GM18951 (cell line): ENCODE measurements at regions of chr5 and their contacts with region 1.

Region 1: GRCh38 chr5:113606298-113607134 is 93.0 kb downstream of the YTHDC2 start:
- POLR2A ChIP-seq: no peak

Region 2: GRCh38 chr5:113371721-113372196 is 234.8 kb before region 1 on chr5:
- in situ Hi-C with region 1: loop called (anchors 25 kb)
- POLR2A ChIP-seq: no peak

Region 3: DNA sequence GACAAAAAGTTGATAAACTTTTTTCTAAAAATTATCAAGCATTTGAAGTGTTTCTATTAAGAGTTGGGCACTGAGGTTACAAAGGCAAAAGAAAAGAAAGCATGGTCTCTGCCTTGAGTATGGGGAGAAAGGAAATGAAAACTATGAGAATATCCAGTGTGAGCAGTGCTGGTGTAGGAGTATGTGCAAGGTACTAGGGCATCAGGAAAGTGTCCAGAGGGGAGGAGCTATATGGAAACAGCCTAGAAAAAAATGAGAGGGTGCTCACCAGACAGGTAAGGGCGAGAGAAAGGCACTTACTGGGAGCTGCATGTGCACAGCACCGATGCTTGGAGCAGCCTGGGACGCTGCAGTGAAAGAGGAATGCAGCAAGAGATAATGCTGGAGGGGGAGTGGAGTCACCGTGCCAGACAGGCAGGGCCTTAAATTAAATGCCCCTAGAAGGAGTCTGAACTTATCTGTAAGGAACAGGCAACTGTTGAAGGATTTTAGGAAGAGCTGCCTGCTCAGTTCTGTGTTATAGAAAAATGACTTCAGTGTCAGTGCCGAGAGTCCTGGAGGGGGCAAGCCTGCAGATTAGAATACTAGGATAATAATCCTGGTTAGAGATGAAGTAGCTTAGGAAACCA is 132.3 kb before region 1 on chr5:
- in situ Hi-C with region 1: no loop called
- POLR2A ChIP-seq: no peak

Region 4: GRCh38 chr5:113723021-113723420 is 116.5 kb after region 1 on chr5:
- in situ Hi-C with region 1: no loop called
- POLR2A ChIP-seq: no peak